CD8-positive, alpha-beta memory T cell (primary cell): ENCODE measurements at regions of chr6 and their contacts with region 1.

Region 1: GRCh38 chr6:90393232-90393884 is 96.7 kb upstream of the BACH2 start:
- DNase-seq: peak; percentile 35 to 79 (median 69)
- H3K4me3 ChIP-seq: no peak overlapping the region
- H3K4me3 Mint-ChIP-seq: no peak overlapping the region
- H3K27ac ChIP-seq: no peak overlapping the region
- H3K27ac Mint-ChIP-seq: peak overlapping the region; percentile 0 to 75 (median 60)
- H3K4me1 ChIP-seq: peaks cover 25% of the 10 kb centered on the region
- H3K4me1 Mint-ChIP-seq: peaks cover 30 to 36% (median 34%) of the 10 kb centered on the region in 3 donors
- H3K27me3 ChIP-seq: no peaks in the 10 kb centered on the region
- H3K27me3 Mint-ChIP-seq: no peaks in the 10 kb centered on the region

Region 2: GRCh38 chr6:90370493-90370959 is 22.8 kb before region 1 on chr6:
- CTCF ChIA-PET with region 1: interaction called, 10 read pairs
- POLR2A ChIA-PET with region 1: no interaction called
- DNase-seq: no peak
- H3K4me3 ChIP-seq: no peak overlapping the region
- H3K4me3 Mint-ChIP-seq: no peak overlapping the region
- H3K27ac ChIP-seq: no peak overlapping the region
- H3K27ac Mint-ChIP-seq: no peak overlapping the region
- H3K4me1 ChIP-seq: peaks cover 3% of the 10 kb centered on the region
- H3K4me1 Mint-ChIP-seq: peaks cover 9 to 19% (median 12%) of the 10 kb centered on the region in 3 donors
- H3K27me3 ChIP-seq: no peaks in the 10 kb centered on the region
- H3K27me3 Mint-ChIP-seq: peaks cover 0 to 1% of the 10 kb centered on the region in 2 donors

Region 3: DNA sequence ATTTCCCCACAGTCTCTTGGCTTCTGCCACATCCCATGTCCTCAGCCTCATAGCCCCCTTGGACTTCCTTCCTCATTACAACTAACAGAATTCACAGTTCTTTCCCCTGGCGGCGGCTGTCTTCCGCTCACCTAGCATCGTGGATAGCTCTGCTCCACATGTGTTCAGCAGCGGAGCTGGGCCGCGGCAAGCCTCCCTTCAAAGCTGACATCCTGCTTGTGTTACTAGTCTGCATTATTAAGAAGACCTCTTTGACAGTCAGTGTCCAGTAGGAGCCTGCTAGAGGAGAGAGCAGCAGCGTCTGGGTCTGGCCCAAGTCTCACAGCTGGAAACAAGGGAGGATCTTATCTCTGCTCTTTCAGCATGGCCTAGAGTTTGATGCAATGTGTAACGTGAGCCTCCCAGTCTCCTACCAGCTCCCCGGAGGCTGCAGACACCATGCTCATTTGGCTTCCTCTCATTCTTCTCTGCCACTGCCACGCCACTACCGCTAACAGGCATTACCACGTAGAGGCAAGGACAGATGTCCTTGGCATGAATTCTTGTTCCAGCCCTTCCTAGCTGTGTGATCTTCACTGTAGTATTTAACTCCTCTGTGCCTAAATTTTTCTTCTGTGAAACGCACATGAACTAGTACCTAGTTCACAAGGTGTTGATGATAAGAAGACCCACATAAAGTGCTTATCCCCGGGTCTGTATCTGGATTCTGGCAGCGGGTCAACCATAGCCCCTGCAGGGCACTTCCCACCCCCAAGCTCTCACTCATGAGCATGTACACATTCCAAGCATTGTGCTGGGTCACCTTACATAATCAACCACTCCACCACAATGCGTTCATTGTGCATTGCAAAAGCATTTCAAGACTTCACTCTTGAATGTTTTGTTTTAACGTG is 10.4 kb after region 1 on chr6:
- CTCF ChIA-PET with region 1: interaction called, 33 read pairs
- POLR2A ChIA-PET with region 1: interaction called, 4 read pairs
- DNase-seq: no peak
- H3K4me3 ChIP-seq: no peak overlapping the region
- H3K4me3 Mint-ChIP-seq: peak overlapping the region in 4 of 7 donors; percentile 21 to 78 (median 57)
- H3K27ac ChIP-seq: no peak overlapping the region
- H3K27ac Mint-ChIP-seq: peak overlapping the region; percentile 84 to 96 (median 94)
- H3K4me1 ChIP-seq: peaks cover 31% of the 10 kb centered on the region
- H3K4me1 Mint-ChIP-seq: peaks cover 63 to 79% (median 75%) of the 10 kb centered on the region in 3 donors
- H3K27me3 ChIP-seq: no peaks in the 10 kb centered on the region
- H3K27me3 Mint-ChIP-seq: no peaks in the 10 kb centered on the region

Region 4: GRCh38 chr6:90425161-90425641 is 31.8 kb after region 1 on chr6:
- CTCF ChIA-PET with region 1: interaction called, 16 read pairs
- POLR2A ChIA-PET with region 1: interaction called, 6 read pairs
- DNase-seq: peak in 2 of 5 donors; percentile 25 to 49
- H3K4me3 ChIP-seq: peak overlapping the region; percentile 33
- H3K4me3 Mint-ChIP-seq: peak overlapping the region; percentile 51 to 82 (median 79)
- H3K27ac ChIP-seq: peak overlapping the region; percentile 34
- H3K27ac Mint-ChIP-seq: peak overlapping the region; percentile 68 to 98 (median 93)
- H3K4me1 ChIP-seq: peaks cover 10% of the 10 kb centered on the region
- H3K4me1 Mint-ChIP-seq: peaks cover 16 to 24% (median 22%) of the 10 kb centered on the region in 3 donors
- H3K27me3 ChIP-seq: no peaks in the 10 kb centered on the region
- H3K27me3 Mint-ChIP-seq: peaks cover 0 to 7% of the 10 kb centered on the region in 2 donors

Region 5: GRCh38 chr6:90472744-90473143 is 79.4 kb after region 1 on chr6:
- CTCF ChIA-PET with region 1: interaction called, 17 read pairs
- POLR2A ChIA-PET with region 1: interaction called, 3 read pairs
- DNase-seq: peak in 1 of 5 donors; percentile 52
- H3K4me3 ChIP-seq: peak overlapping the region; percentile 30
- H3K4me3 Mint-ChIP-seq: peak overlapping the region in 6 of 7 donors; percentile 62 to 83 (median 74)
- H3K27ac ChIP-seq: no peak overlapping the region
- H3K27ac Mint-ChIP-seq: peak overlapping the region in 4 of 8 donors; percentile 20 to 64 (median 54)
- H3K4me1 ChIP-seq: peaks cover 32% of the 10 kb centered on the region
- H3K4me1 Mint-ChIP-seq: peaks cover 36 to 53% (median 51%) of the 10 kb centered on the region in 3 donors
- H3K27me3 ChIP-seq: no peaks in the 10 kb centered on the region
- H3K27me3 Mint-ChIP-seq: peaks cover 0 to 5% of the 10 kb centered on the region in 2 donors